ENCODE measurements at regions of chr1 and their contacts with region 1.

Region 1: GRCh38 chr1:27603681-27604578 is at the start of gene AHDC1:
- DNase-seq: peak; percentile 91
- H3K4me3 Mint-ChIP-seq: peak within 1 kb of the TSS; percentile 90
- H3K27ac Mint-ChIP-seq: peak within 1 kb of the TSS; percentile 63
- H3K4me1 Mint-ChIP-seq: peaks cover 30% of the 10 kb centered on the region
- H3K27me3 Mint-ChIP-seq: no peaks in the 10 kb centered on the region
- CTCF ChIP-seq: no peak
- total RNA-seq, gene AHDC1: 18.4 and 25.2 TPM in 2 replicates

Region 2: GRCh38 chr1:27300341-27301051 is 303.4 kb before region 1 on chr1:
- CTCF ChIA-PET with region 1: interaction called, 37 read pairs
- POLR2A ChIA-PET with region 1: interaction called, 3 read pairs
- intact Hi-C with region 1: loop called (anchors 5 kb)
- DNase-seq: peak; percentile 85
- H3K4me3 Mint-ChIP-seq: no peak overlapping the region
- H3K27ac Mint-ChIP-seq: peak overlapping the region; percentile 67
- H3K4me1 Mint-ChIP-seq: peaks cover 13% of the 10 kb centered on the region
- H3K27me3 Mint-ChIP-seq: no peaks in the 10 kb centered on the region
- CTCF ChIP-seq: peak; percentile 99

Region 3: DNA sequence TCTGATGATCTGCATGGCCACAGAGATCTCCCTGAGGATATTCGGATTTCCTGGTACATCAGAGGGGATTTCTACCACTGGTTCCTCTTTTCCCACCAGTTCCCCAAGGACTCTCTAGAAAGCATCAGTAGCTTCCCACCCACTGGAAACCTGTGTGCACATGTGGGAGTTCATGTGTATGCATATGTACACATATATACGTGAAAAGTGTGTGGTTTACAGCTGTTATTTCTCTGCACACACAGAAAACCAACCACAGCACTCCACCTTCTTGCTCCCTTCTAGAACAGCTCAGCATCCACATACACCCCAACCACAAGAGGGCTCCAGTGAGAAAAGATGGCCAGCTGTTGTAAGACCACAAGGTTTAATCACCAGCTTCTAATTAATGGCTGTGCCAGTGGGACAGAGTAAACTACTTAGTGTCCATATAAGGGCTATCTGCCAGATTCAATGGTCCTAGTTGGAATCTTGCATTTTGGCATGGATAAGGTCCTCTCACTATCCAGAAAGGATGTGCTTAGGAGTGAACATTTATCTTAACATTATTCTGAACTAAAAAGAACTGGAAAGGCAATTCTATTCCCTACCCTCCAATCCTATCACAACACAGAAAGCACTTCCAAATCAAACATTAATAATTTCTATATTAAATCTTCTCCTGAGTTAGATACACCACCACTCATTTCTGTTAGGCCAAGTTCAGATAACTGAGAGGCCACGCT is 187.4 kb before region 1 on chr1:
- CTCF ChIA-PET with region 1: interaction called, 30 read pairs
- POLR2A ChIA-PET with region 1: interaction called, 4 read pairs
- intact Hi-C with region 1: loop called (anchors 1 kb)
- DNase-seq: peak; percentile 73
- H3K4me3 Mint-ChIP-seq: no peak overlapping the region
- H3K27ac Mint-ChIP-seq: peak overlapping the region; percentile 19
- H3K4me1 Mint-ChIP-seq: peaks cover 12% of the 10 kb centered on the region
- H3K27me3 Mint-ChIP-seq: no peaks in the 10 kb centered on the region
- CTCF ChIP-seq: peak; percentile 58

Region 4: GRCh38 chr1:27568300-27569087 is 35.4 kb before region 1 on chr1:
- CTCF ChIA-PET with region 1: interaction called, 20 read pairs
- POLR2A ChIA-PET with region 1: interaction called, 5 read pairs
- intact Hi-C with region 1: no loop called
- DNase-seq: peak; percentile 97
- H3K4me3 Mint-ChIP-seq: peak overlapping the region; percentile 61
- H3K27ac Mint-ChIP-seq: peak overlapping the region; percentile 22
- H3K4me1 Mint-ChIP-seq: peaks cover 43% of the 10 kb centered on the region
- H3K27me3 Mint-ChIP-seq: no peaks in the 10 kb centered on the region
- CTCF ChIP-seq: peak; percentile 64

Region 5: GRCh38 chr1:27650539-27651175 is 46.7 kb after region 1 on chr1:
- CTCF ChIA-PET with region 1: interaction called, 14 read pairs
- POLR2A ChIA-PET with region 1: no interaction called
- intact Hi-C with region 1: no loop called
- DNase-seq: peak; percentile 57
- H3K4me3 Mint-ChIP-seq: no peak overlapping the region
- H3K27ac Mint-ChIP-seq: peak overlapping the region; percentile 14
- H3K4me1 Mint-ChIP-seq: peaks cover 30% of the 10 kb centered on the region
- H3K27me3 Mint-ChIP-seq: no peaks in the 10 kb centered on the region
- CTCF ChIP-seq: no peak

Region 6: DNA sequence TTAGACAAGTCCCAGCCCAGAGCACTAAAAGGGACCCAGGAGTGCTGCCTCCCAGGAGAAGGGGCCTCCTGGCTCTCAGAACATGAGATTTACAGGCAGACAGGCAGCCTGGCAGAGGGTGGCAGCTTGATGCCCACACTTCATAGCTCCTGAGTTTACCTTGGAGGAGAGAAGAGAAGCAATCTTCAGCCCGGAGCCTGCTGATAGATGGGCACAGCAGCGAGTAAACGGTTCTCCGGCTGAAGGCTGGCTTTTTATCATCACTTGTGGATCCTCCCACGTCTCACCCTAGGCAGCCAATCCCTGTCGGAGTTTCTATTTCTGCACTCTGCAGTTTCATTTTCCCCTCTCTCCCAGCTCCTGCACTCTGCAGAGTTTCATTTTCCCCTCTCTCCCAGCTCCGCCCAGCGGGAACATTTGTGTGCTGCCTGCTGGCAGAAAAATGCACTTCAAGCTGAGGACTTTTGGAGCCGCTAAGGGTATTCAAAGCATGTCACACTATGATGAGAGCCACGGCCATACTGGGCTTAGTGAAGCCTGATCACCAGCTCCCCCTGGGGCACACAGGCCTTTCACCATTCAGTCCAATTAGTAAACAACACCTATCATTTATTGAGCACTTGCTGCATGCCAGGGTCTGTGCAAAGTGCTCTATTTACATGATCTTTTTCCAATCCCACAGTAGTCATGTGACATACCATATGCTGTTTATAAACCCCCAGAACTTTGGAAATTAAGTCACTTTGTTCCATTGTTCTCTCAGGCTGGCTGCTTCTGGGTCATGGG is 68.2 kb after region 1 on chr1 and contains the start of gene IFI6:
- CTCF ChIA-PET with region 1: interaction called, 59 read pairs
- POLR2A ChIA-PET with region 1: no interaction called
- intact Hi-C with region 1: no loop called
- DNase-seq: peak; percentile 95
- H3K4me3 Mint-ChIP-seq: peak within 1 kb of the TSS; percentile 77
- H3K27ac Mint-ChIP-seq: peak within 1 kb of the TSS; percentile 64
- H3K4me1 Mint-ChIP-seq: peaks cover 10% of the 10 kb centered on the region
- H3K27me3 Mint-ChIP-seq: no peaks in the 10 kb centered on the region
- CTCF ChIP-seq: no peak
- total RNA-seq, gene IFI6: 3.8 and 5.8 TPM in 2 replicates

Region 7: DNA sequence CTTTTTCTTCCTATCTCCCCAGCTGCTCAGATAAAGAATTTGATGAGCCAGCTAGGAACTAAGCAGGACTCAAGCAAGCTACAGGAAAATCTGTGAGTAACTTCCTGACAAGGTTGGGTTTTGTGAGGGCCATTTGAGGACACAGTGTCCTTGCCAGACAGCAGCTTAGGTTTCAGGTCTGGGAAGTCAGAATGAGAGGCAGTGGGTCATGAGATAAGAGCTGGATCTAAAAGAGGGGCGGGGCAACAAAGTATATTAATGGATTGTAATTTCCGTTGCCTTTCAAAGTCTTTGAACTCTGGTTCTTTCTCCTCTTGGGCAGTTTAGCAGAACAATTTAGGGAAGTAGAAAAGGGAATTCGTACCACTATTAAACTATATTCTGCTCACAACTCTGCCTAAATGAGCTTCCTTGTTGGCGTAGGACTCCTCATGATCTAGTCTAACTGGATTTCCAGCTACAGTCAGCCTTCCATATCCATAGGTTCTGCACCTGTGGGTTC is 185.7 kb after region 1 on chr1:
- CTCF ChIA-PET with region 1: no interaction called
- POLR2A ChIA-PET with region 1: no interaction called
- intact Hi-C with region 1: no loop called
- DNase-seq: no peak
- H3K4me3 Mint-ChIP-seq: no peak overlapping the region
- H3K27ac Mint-ChIP-seq: no peak overlapping the region
- H3K4me1 Mint-ChIP-seq: peaks cover 9% of the 10 kb centered on the region
- H3K27me3 Mint-ChIP-seq: no peaks in the 10 kb centered on the region
- CTCF ChIP-seq: no peak

Region 8: DNA sequence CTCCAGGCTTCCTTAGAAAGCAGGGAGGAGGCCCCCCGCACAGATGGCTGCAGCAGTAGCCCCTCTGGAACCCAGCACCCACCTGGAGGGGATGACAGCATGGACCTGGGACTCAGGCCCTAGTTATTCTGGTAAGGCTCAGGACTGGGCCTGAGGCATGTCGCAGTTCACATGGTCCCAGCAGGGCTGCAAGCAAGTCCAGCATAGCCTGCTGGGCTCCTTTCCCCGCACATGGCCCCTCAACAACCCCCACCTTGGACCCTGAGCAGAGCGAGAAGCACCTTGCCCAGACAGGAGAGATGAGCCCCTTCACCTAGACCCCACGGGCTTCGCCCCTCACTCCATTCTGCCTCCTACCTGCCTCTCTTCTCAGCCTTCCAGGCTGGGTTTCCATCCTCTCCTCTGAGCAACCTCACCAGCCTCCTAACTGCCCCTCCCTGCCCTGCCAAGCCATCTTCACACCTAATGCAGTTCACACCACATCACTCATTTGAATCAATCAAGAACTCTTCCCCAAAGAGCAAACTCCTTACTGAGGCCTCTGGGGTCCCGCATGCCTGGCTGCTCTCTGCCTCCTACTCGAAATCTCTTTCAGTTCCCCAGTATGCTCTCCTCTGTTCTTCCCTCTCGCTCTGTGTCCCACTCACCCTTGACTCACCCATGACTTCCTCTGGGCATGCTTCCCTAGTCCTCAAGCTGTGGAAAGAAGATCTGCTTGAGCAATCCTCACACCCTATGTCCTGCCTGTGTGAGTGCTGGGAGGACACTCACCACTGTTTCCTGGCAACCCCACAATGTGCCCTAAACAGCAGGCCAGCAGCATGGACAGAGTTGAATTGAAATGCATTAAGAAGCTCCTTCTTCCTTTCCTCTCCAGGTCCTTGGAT is 259.0 kb after region 1 on chr1:
- CTCF ChIA-PET with region 1: no interaction called
- POLR2A ChIA-PET with region 1: no interaction called
- intact Hi-C with region 1: no loop called
- DNase-seq: peak; percentile 99
- H3K4me3 Mint-ChIP-seq: peak overlapping the region; percentile 22
- H3K27ac Mint-ChIP-seq: peak overlapping the region; percentile 90
- H3K4me1 Mint-ChIP-seq: peaks cover 22% of the 10 kb centered on the region
- H3K27me3 Mint-ChIP-seq: no peaks in the 10 kb centered on the region
- CTCF ChIP-seq: no peak

Measured in MCF 10A (cell line).